Esophagus muscularis mucosa (tissue), 4 donors: ENCODE measurements at regions of chr1 and their contacts with region 1.

Region 1: DNA sequence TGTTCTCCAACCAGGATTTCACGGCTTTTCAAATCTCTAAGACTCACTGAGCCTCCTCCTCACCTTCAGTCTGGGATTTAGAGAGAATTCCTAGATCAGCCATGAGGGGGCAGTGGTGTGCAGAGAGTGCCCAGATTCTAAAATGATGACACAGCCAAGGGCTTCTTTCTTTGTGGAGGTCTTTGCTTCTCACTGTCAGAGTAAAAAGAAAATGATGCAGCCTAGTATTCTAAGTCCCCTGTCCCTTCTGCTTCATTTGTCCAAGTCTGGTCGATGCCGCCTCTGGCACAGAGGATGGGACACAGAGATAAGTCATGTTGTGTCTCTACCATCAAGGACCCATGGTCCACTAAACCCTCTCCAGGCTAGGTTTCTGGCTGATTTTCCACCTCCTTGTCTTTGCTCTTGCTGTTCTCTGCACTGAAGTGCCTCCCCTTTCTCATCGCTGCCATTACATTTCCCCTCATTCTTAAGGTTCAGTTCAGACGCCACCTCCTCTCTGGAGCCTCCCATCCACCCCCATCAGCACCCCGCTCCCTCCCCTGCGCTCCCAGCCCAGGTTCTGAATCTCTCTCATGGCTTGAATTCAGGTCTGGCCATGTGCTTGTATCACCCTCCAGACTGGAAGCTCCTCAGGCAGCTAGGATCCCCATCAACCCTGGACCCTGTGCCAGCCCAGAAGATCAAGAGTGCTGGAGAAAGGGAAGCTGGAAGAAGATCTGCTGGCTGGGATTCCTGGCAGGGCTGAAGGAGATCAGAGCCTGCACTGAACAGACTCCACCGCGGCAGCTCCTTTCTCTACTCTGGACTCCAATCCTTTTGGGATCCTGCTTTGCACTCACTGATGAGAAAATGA is 12.0 kb upstream of the TINAGL1 start:
- DNase-seq: peak; percentile 92
- H3K4me3 ChIP-seq: no peak overlapping the region
- H3K27ac ChIP-seq: no peak overlapping the region
- H3K4me1 ChIP-seq: peaks cover 7 to 12% (median 11%) of the 10 kb centered on the region in 4 donors
- H3K27me3 ChIP-seq: peaks cover 0 to 24% (median 0%) of the 10 kb centered on the region in 4 donors
- CTCF ChIP-seq: peak; percentile 90 to 91 (median 90)
- EP300 ChIP-seq: no peak
- POLR2A ChIP-seq: no peak

Region 2: GRCh38 chr1:31593770-31594632 is 29.6 kb after region 1 on chr1:
- intact Hi-C with region 1: loop called (anchors 1 kb)
- DNase-seq: no peak
- H3K4me3 ChIP-seq: no peak overlapping the region
- H3K27ac ChIP-seq: no peak overlapping the region
- H3K4me1 ChIP-seq: peaks cover 12 to 25% (median 22%) of the 10 kb centered on the region in 4 donors
- H3K27me3 ChIP-seq: no peaks in the 10 kb centered on the region
- CTCF ChIP-seq: peak; percentile 88 to 89 (median 89)
- EP300 ChIP-seq: no peak
- POLR2A ChIP-seq: no peak

Region 3: GRCh38 chr1:31705080-31705866 is 140.9 kb after region 1 on chr1:
- intact Hi-C with region 1: loop called (anchors 10 kb)
- DNase-seq: no peak
- H3K4me3 ChIP-seq: peak overlapping the region; percentile 52 to 59 (median 54)
- H3K27ac ChIP-seq: peak overlapping the region; percentile 81 to 87 (median 84)
- H3K4me1 ChIP-seq: peaks cover 40 to 66% (median 54%) of the 10 kb centered on the region in 4 donors
- H3K27me3 ChIP-seq: no peaks in the 10 kb centered on the region
- CTCF ChIP-seq: peak; percentile 27 to 47 (median 44)
- EP300 ChIP-seq: no peak
- POLR2A ChIP-seq: no peak

Region 4: GRCh38 chr1:31795801-31796621 is 231.6 kb after region 1 on chr1:
- intact Hi-C with region 1: no loop called
- DNase-seq: no peak
- H3K4me3 ChIP-seq: no peak overlapping the region
- H3K27ac ChIP-seq: no peak overlapping the region
- H3K4me1 ChIP-seq: peaks cover 0 to 7% (median 0%) of the 10 kb centered on the region in 4 donors
- H3K27me3 ChIP-seq: peaks cover 0 to 48% (median 0%) of the 10 kb centered on the region in 4 donors
- CTCF ChIP-seq: no peak
- EP300 ChIP-seq: no peak
- POLR2A ChIP-seq: no peak